ENCODE measurements at regions of chr20 and their contacts with region 1.

Region 1: GRCh38 chr20:5770987-5771318 is 20.8 kb downstream of the SHLD1 start:
- DNase-seq: peak; percentile 16
- H3K4me3 ChIP-seq: no peak overlapping the region
- H3K27ac ChIP-seq: no peak overlapping the region
- H3K4me1 ChIP-seq: no peaks in the 10 kb centered on the region
- H3K27me3 ChIP-seq: no peaks in the 10 kb centered on the region
- CTCF ChIP-seq: no peak

Region 2: DNA sequence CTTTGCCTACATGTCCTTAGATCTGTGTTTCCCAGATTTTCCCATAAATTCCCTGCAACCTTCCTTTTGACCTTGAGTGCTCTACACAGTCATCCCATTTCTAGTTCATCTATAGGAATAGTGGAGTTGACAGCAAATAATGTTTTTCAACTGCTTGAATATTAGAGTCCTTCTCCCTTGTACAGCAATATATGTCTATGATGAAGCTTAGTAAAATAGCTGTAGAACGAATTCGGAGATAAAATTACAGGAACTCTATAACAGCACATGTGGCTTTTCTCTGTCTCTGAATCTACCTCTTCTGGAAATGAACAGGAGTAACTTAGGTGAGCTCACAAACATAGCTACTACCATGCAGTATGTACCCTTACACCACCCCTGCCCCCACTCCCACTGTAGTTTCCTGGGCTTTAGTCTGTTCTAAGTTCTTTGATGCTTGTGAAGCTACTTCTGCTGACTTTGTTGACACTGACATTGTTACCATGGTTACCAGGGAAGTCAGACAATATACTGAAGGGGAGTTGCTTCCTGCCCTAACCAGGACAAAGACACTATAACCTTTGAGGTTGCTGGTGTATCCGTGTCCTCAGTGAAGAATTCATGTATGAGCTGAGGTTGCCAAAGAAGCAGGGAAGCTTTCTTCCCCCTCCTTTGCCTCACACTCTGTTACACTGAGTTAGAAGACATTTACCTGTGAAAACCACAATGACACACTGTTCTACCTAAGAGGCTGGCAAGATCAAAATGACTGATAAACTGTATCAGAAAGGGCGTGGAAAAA is 56.5 kb before region 1 on chr20:
- CTCF ChIA-PET with region 1: no interaction called
- dilution Hi-C with region 1: loop called (anchors 5 kb)
- in situ Hi-C with region 1: no loop called
- intact Hi-C with region 1: no loop called
- DNase-seq: peak; percentile 88
- H3K4me3 ChIP-seq: no peak overlapping the region
- H3K27ac ChIP-seq: no peak overlapping the region
- H3K4me1 ChIP-seq: peaks cover 13% of the 10 kb centered on the region
- H3K27me3 ChIP-seq: no peaks in the 10 kb centered on the region
- CTCF ChIP-seq: no peak

Measured in mammary epithelial cell (primary cell).